CD4-positive, alpha-beta T cell (primary cell): ENCODE measurements at regions of chr1 and their contacts with region 1.

Region 1: DNA sequence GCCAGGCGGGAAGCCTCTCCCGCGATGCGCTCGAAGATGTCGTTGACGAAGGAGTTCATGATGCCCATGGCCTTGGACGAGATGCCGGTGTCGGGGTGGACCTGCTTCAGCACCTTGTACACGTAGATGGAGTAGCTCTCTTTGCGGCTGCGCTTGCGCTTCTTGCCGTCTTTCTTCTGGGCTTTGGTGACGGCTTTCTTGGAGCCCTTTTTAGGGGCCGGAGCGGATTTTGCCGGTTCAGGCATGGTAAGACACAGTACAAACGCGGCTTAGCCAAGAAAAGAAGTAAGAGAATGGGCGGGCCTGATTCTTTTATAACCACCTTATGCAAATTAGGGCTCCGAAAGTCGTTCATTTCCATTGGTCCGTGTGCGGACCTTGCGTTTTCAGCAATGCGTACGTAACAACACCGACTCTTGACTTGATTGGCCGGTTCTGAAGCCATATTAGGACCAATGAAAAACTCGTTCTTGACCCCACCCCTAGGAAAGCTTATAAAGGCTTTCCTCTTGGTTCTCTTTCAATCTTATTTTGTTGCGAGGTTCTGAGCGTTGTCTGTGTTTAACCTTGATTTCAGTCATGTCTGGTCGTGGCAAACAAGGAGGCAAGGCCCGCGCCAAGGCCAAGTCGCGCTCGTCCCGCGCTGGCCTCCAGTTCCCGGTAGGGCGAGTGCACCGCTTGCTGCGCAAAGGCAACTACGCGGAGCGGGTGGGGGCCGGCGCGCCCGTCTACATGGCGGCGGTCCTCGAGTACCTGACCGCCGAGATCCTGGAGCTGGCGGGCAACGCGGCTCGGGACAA is 12.8 kb upstream of the BOLA1 start:
- DNase-seq: peak; percentile 67 to 98 (median 82)
- ATAC-seq: peak; percentile 65
- H3K4me3 ChIP-seq: peak overlapping the region; percentile 87
- H3K4me3 Mint-ChIP-seq: no peak overlapping the region
- H3K27ac ChIP-seq: peak overlapping the region; percentile 91 to 96
- H3K27ac Mint-ChIP-seq: no peak overlapping the region
- H3K4me1 ChIP-seq: peaks cover 31% of the 10 kb centered on the region
- H3K4me1 Mint-ChIP-seq: peaks cover 10% of the 10 kb centered on the region
- H3K27me3 ChIP-seq: no peaks in the 10 kb centered on the region
- H3K27me3 Mint-ChIP-seq: no peaks in the 10 kb centered on the region
- CTCF ChIP-seq: no peak

Region 2: DNA sequence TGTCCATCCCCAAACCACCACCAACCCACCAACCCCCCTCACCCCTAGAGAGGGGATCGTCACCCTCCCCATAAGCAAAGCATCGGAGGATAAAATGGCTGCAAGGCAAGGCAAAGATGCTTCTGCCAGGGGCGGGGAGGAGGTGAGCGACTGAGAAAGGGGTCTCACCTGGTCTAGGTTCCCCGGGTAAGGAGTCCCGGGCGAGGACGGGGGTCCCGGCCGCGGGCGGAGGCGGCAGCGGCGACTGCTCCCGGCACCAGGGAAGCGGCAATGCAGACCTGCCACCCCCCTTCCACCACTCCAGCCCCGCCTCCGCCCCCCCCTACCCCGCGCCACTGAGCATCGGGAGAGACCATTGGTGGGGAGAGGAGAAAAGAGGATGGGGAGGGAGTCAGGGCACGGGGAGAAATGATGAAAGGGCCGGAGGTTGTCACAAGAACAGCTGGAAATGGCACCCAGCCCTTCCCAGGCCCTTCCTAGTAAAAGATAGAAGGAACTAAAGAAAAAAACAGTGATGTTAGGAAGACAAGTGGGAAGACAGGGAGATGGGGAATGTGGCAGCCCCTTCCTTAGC is 31.1 kb after region 1 on chr1 and contains the start of gene SV2A:
- CTCF ChIA-PET with region 1: interaction called, 3 read pairs
- POLR2A ChIA-PET with region 1: interaction called, 47 read pairs
- intact Hi-C with region 1: no loop called
- DNase-seq: peak in 13 of 14 experiments; percentile 12 to 72 (median 44)
- ATAC-seq: peak; percentile 68
- H3K4me3 ChIP-seq: peak within 1 kb of the TSS; percentile 72
- H3K4me3 Mint-ChIP-seq: peak within 1 kb of the TSS; percentile 88
- H3K27ac ChIP-seq: no peak within 1 kb of the TSS
- H3K27ac Mint-ChIP-seq: peak within 1 kb of the TSS; percentile 63
- H3K4me1 ChIP-seq: peaks cover 26% of the 10 kb centered on the region
- H3K4me1 Mint-ChIP-seq: peaks cover 43% of the 10 kb centered on the region
- H3K27me3 ChIP-seq: no peaks in the 10 kb centered on the region
- H3K27me3 Mint-ChIP-seq: no peaks in the 10 kb centered on the region
- CTCF ChIP-seq: no peak
- total RNA-seq, gene SV2A: 2.5 to 2.9 TPM

Region 3: GRCh38 chr1:150010393-150011115 is 124.0 kb after region 1 on chr1 and contains the start of gene OTUD7B:
- CTCF ChIA-PET with region 1: no interaction called
- POLR2A ChIA-PET with region 1: interaction called, 36 read pairs
- intact Hi-C with region 1: no loop called
- DNase-seq: peak; percentile 35 to 78 (median 57)
- ATAC-seq: peak; percentile 73
- H3K4me3 ChIP-seq: peak within 1 kb of the TSS; percentile 77
- H3K4me3 Mint-ChIP-seq: peak within 1 kb of the TSS; percentile 96
- H3K27ac ChIP-seq: peak within 1 kb of the TSS in 1 of 2 donors; percentile 52
- H3K27ac Mint-ChIP-seq: peak within 1 kb of the TSS; percentile 66
- H3K4me1 ChIP-seq: peaks cover 8% of the 10 kb centered on the region
- H3K4me1 Mint-ChIP-seq: peaks cover 33% of the 10 kb centered on the region
- H3K27me3 ChIP-seq: no peaks in the 10 kb centered on the region
- H3K27me3 Mint-ChIP-seq: no peaks in the 10 kb centered on the region
- CTCF ChIP-seq: no peak
- total RNA-seq, gene OTUD7B: 2.0 to 2.9 TPM

Region 4: GRCh38 chr1:150093805-150094204 is 207.2 kb after region 1 on chr1:
- CTCF ChIA-PET with region 1: no interaction called
- POLR2A ChIA-PET with region 1: no interaction called
- intact Hi-C with region 1: no loop called
- DNase-seq: no peak
- ATAC-seq: no peak
- H3K4me3 ChIP-seq: no peak overlapping the region
- H3K4me3 Mint-ChIP-seq: no peak overlapping the region
- H3K27ac ChIP-seq: no peak overlapping the region
- H3K27ac Mint-ChIP-seq: peak overlapping the region; percentile 32
- H3K4me1 ChIP-seq: peaks cover 15% of the 10 kb centered on the region
- H3K4me1 Mint-ChIP-seq: peaks cover 34% of the 10 kb centered on the region
- H3K27me3 ChIP-seq: no peaks in the 10 kb centered on the region
- H3K27me3 Mint-ChIP-seq: no peaks in the 10 kb centered on the region
- CTCF ChIP-seq: no peak

Region 5: GRCh38 chr1:150109586-150109985 is 223.0 kb after region 1 on chr1:
- CTCF ChIA-PET with region 1: no interaction called
- POLR2A ChIA-PET with region 1: interaction called, 10 read pairs
- intact Hi-C with region 1: no loop called
- DNase-seq: peak in 4 of 14 experiments; percentile 11 to 74 (median 58)
- ATAC-seq: peak; percentile 57
- H3K4me3 ChIP-seq: peak overlapping the region; percentile 58
- H3K4me3 Mint-ChIP-seq: peak overlapping the region; percentile 88
- H3K27ac ChIP-seq: peak overlapping the region; percentile 59 to 77
- H3K27ac Mint-ChIP-seq: peak overlapping the region; percentile 86
- H3K4me1 ChIP-seq: peaks cover 49% of the 10 kb centered on the region
- H3K4me1 Mint-ChIP-seq: peaks cover 85% of the 10 kb centered on the region
- H3K27me3 ChIP-seq: no peaks in the 10 kb centered on the region
- H3K27me3 Mint-ChIP-seq: no peaks in the 10 kb centered on the region
- CTCF ChIP-seq: no peak

Region 6: GRCh38 chr1:150194381-150195031 is 307.9 kb after region 1 on chr1:
- CTCF ChIA-PET with region 1: no interaction called
- POLR2A ChIA-PET with region 1: no interaction called
- intact Hi-C with region 1: no loop called
- DNase-seq: no peak
- ATAC-seq: no peak
- H3K4me3 ChIP-seq: no peak overlapping the region
- H3K4me3 Mint-ChIP-seq: no peak overlapping the region
- H3K27ac ChIP-seq: no peak overlapping the region
- H3K27ac Mint-ChIP-seq: no peak overlapping the region
- H3K4me1 ChIP-seq: no peaks in the 10 kb centered on the region
- H3K4me1 Mint-ChIP-seq: no peaks in the 10 kb centered on the region
- H3K27me3 ChIP-seq: no peaks in the 10 kb centered on the region
- H3K27me3 Mint-ChIP-seq: peaks cover 9% of the 10 kb centered on the region
- CTCF ChIP-seq: no peak

Region 7: GRCh38 chr1:150561974-150562445 is 675.4 kb after region 1 on chr1:
- CTCF ChIA-PET with region 1: no interaction called
- POLR2A ChIA-PET with region 1: interaction called, 26 read pairs
- intact Hi-C with region 1: no loop called
- DNase-seq: peak; percentile 69 to 93 (median 84)
- ATAC-seq: peak; percentile 47
- H3K4me3 ChIP-seq: peak overlapping the region; percentile 90
- H3K4me3 Mint-ChIP-seq: peak overlapping the region; percentile 96
- H3K27ac ChIP-seq: peak overlapping the region; percentile 92 to 97
- H3K27ac Mint-ChIP-seq: peak overlapping the region; percentile 98
- H3K4me1 ChIP-seq: peaks cover 89% of the 10 kb centered on the region
- H3K4me1 Mint-ChIP-seq: peaks cover 63% of the 10 kb centered on the region
- H3K27me3 ChIP-seq: no peaks in the 10 kb centered on the region
- H3K27me3 Mint-ChIP-seq: no peaks in the 10 kb centered on the region
- CTCF ChIP-seq: no peak

Region 8: GRCh38 chr1:151024540-151025146 is 1138.0 kb after region 1 on chr1:
- CTCF ChIA-PET with region 1: no interaction called
- POLR2A ChIA-PET with region 1: no interaction called
- intact Hi-C with region 1: no loop called
- DNase-seq: peak; percentile 81 to 95 (median 88)
- ATAC-seq: peak; percentile 100
- H3K4me3 ChIP-seq: no peak overlapping the region
- H3K4me3 Mint-ChIP-seq: no peak overlapping the region
- H3K27ac ChIP-seq: no peak overlapping the region
- H3K27ac Mint-ChIP-seq: peak overlapping the region; percentile 52
- H3K4me1 ChIP-seq: peaks cover 7% of the 10 kb centered on the region
- H3K4me1 Mint-ChIP-seq: peaks cover 6% of the 10 kb centered on the region
- H3K27me3 ChIP-seq: no peaks in the 10 kb centered on the region
- H3K27me3 Mint-ChIP-seq: no peaks in the 10 kb centered on the region
- CTCF ChIP-seq: peak; percentile 83